ENCODE measurements at regions of chr10 and their contacts with region 1.

Region 1: GRCh38 chr10:4498711-4499251 is 327.2 kb upstream of the AKR1E2 start:
- DNase-seq: no peak
- H3K4me3 ChIP-seq: no peak overlapping the region
- H3K27ac ChIP-seq: peak overlapping the region; percentile 93 to 95
- H3K4me1 ChIP-seq: peaks cover 8 to 20% of the 10 kb centered on the region in 2 donors
- H3K27me3 ChIP-seq: no peaks in the 10 kb centered on the region
- CTCF ChIP-seq: no peak

Region 2: GRCh38 chr10:4353964-4354363 is 144.8 kb before region 1 on chr10:
- intact Hi-C with region 1: loop called (anchors 2 kb)
- DNase-seq: no peak
- H3K4me3 ChIP-seq: peak overlapping the region in 1 of 2 donors; percentile 25
- H3K27ac ChIP-seq: peak overlapping the region; percentile 68 to 76
- H3K4me1 ChIP-seq: peaks cover 7 to 36% of the 10 kb centered on the region in 2 donors
- H3K27me3 ChIP-seq: no peaks in the 10 kb centered on the region
- CTCF ChIP-seq: no peak

Region 3: DNA sequence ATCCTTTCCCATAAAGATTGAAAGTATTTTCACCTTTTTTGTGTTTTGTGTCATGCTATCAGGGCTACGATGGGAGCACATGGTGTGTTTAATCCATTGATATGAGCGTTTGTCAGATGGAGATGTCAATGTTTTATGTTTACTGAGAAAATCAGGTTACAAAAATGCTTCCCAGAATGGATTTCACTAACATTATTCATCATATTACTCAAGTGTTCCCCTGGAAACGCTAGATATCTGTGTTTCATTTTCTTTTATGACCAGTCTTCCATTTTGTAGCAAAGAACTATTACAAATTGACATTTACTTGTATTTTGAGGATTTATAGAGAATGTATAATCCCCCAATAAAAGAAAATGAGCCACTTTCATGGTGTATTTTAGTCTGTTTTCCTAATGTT is 33.7 kb after region 1 on chr10:
- intact Hi-C with region 1: loop called (anchors 5 kb)
- DNase-seq: no peak
- H3K4me3 ChIP-seq: no peak overlapping the region
- H3K27ac ChIP-seq: peak overlapping the region; percentile 22 to 42
- H3K4me1 ChIP-seq: peaks cover 0 to 4% of the 10 kb centered on the region in 2 donors
- H3K27me3 ChIP-seq: no peaks in the 10 kb centered on the region
- CTCF ChIP-seq: no peak

Region 4: GRCh38 chr10:4656576-4657182 is 157.9 kb after region 1 on chr10:
- intact Hi-C with region 1: loop called (anchors 5 kb)
- DNase-seq: peak in 1 of 2 donors; percentile 70
- H3K4me3 ChIP-seq: no peak overlapping the region
- H3K27ac ChIP-seq: no peak overlapping the region
- H3K4me1 ChIP-seq: peaks cover 0 to 8% of the 10 kb centered on the region in 2 donors
- H3K27me3 ChIP-seq: no peaks in the 10 kb centered on the region
- CTCF ChIP-seq: peak; percentile 84 to 91 (median 84)

Measured in ascending aorta (tissue), 2 donors.